ENCODE measurements at regions of chr15 and their contacts with region 1.

Region 1: GRCh38 chr15:55789066-55789660 is 46.2 kb upstream of the PRTG start:
- DNase-seq: peak; percentile 73
- H3K4me3 Mint-ChIP-seq: no peak overlapping the region
- H3K27ac Mint-ChIP-seq: no peak overlapping the region
- H3K4me1 Mint-ChIP-seq: no peaks in the 10 kb centered on the region
- H3K27me3 Mint-ChIP-seq: peaks cover 6% of the 10 kb centered on the region

Region 2: DNA sequence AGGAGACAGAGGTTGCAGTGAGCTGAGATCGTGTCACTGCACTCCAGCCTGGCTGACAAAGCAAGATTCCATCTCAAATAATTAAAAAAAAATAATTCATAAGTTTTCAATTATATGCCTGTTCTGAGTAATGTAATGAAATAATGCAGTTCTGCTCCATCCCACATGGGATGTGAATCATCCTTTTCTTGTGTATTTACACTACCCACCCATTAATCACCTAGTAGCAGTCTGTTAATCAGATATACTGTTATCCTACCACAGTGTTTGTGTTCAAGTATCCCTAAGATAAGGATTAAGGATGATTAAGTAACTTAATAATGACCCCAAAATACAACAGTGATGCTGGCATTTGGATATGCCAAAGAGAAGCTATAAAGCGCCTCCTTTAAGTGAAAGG is 431.4 kb before region 1 on chr15:
- CTCF ChIA-PET with region 1: no interaction called
- POLR2A ChIA-PET with region 1: no interaction called
- intact Hi-C with region 1: no loop called
- DNase-seq: no peak
- H3K4me3 Mint-ChIP-seq: no peak overlapping the region
- H3K27ac Mint-ChIP-seq: no peak overlapping the region
- H3K4me1 Mint-ChIP-seq: peaks cover 2% of the 10 kb centered on the region
- H3K27me3 Mint-ChIP-seq: no peaks in the 10 kb centered on the region

Region 3: GRCh38 chr15:55775316-55775715 is 13.8 kb before region 1 on chr15:
- CTCF ChIA-PET with region 1: interaction called, 17 read pairs
- POLR2A ChIA-PET with region 1: no interaction called
- intact Hi-C with region 1: no loop called
- DNase-seq: no peak
- H3K4me3 Mint-ChIP-seq: no peak overlapping the region
- H3K27ac Mint-ChIP-seq: no peak overlapping the region
- H3K4me1 Mint-ChIP-seq: no peaks in the 10 kb centered on the region
- H3K27me3 Mint-ChIP-seq: peaks cover 11% of the 10 kb centered on the region

Region 4: DNA sequence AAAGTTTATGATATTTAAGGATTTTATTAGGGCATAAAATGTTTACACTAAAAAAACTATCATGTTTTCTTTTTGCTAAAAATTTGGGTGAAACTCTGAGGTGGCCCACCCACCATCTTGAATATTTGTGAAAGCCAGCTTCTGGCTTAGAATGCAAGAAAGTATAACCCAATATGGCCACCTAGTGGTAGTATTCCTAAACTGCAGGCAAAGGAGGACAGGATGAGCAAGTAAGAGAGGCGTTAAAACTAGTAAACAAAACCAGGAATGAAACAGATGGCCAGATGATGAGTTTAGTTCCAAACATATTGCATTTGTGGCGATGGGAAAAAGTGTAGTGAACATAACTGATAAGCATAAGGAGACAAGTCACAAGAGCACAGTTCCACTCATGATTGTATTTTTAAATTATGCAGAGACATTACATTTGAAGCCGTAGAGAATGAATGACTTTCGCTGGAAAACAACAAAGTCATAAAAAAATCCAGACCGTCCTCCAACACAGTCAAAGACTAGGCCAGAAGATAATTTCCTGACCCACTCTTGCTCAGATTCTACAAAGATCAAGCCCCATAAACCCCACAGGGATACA is 57.0 kb after region 1 on chr15:
- CTCF ChIA-PET with region 1: interaction called, 34 read pairs
- POLR2A ChIA-PET with region 1: no interaction called
- intact Hi-C with region 1: loop called (anchors 1 kb)
- DNase-seq: peak; percentile 13
- H3K4me3 Mint-ChIP-seq: no peak overlapping the region
- H3K27ac Mint-ChIP-seq: no peak overlapping the region
- H3K4me1 Mint-ChIP-seq: peaks cover 2% of the 10 kb centered on the region
- H3K27me3 Mint-ChIP-seq: no peaks in the 10 kb centered on the region